Heart left ventricle (tissue), 16 donors: ENCODE measurements at regions of chr10 and their contacts with region 1.

Region 1: DNA sequence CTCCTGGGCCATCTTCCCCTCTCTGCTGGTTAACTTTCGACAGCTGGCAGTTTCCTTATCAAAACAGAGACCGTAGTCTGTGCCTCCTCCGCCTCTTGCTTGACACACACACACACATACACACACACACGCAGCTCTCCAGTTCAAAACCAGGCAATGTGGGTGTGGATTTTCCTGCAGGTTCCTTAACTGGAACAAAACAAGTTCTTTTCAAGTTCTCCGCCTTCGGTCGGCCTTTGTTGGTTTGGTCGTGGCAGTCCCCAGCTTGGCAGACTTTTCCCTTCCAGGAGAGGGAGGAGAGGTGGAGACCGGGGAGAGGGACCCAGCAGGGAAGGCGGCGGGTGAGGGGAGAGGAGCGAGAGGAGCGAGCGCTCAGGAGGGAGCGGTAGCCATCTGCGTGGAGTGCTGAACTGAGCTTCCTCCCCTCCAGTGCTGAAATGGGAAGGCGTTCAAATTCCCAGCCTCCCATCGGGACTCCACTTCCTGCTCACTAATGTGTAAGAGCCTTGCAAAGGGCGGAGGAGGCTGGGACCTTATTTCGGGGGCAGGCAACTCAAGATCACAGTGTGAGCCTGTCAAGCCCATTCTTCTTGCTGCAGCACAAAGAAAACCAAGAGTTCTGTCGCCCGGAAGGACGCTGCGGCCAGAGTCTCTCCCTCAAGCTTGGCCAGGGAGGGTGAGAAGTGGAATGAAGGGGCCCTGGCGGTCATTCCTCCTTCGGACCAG is 120.6 kb downstream of the PRPF18 start:
- DNase-seq: peak; percentile 86 to 93 (median 91)
- ATAC-seq: peak; percentile 81 to 92 (median 92)
- H3K4me3 ChIP-seq: peak overlapping the region; percentile 16 to 78 (median 63)
- H3K27ac ChIP-seq: peak overlapping the region; percentile 60 to 91 (median 82)
- H3K4me1 ChIP-seq: peaks cover 4 to 92% (median 58%) of the 10 kb centered on the region in 12 donors
- H3K27me3 ChIP-seq: no peaks in the 10 kb centered on the region
- CTCF ChIP-seq: peak in 3 of 12 donors; percentile 4 to 18 (median 8)
- POLR2A ChIP-seq: peak in 1 of 2 donors; percentile 31

Region 2: GRCh38 chr10:13684252-13684791 is 23.0 kb before region 1 on chr10:
- intact Hi-C with region 1: loop called in 1 of 10 experiments (anchors 1 kb)
- DNase-seq: peak; percentile 89 to 94 (median 90)
- ATAC-seq: peak; percentile 60 to 77 (median 68)
- H3K4me3 ChIP-seq: peak overlapping the region in 1 of 12 donors; percentile 0
- H3K27ac ChIP-seq: peak overlapping the region; percentile 60 to 95 (median 84)
- H3K4me1 ChIP-seq: peaks cover 11 to 64% (median 46%) of the 10 kb centered on the region in 12 donors
- H3K27me3 ChIP-seq: no peaks in the 10 kb centered on the region
- CTCF ChIP-seq: no peak
- POLR2A ChIP-seq: no peak

Region 3: DNA sequence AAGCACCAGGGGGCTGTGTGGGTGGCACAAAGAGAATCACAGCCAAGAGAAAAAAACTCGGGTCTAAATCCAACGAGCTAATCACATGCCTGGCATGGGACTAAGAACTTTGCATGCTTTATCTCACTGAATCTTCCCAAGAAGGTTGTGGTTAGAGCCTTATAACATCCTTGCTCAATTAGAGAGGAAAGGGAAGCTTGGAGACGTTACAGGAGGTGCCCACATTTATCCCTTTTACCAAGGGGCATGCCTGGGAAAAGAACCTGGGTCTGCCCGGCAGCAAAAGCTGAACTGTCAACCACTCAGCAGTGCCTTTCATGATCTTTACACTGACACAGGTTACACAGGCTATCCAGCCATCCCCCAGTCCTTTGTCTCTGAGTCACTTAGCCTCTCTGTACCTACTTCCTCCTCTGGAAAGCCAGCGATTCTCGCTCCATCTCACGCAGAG is 69.6 kb after region 1 on chr10:
- intact Hi-C with region 1: loop called in 3 of 10 experiments (anchors 5 to 10 kb)
- DNase-seq: no peak
- ATAC-seq: no peak
- H3K4me3 ChIP-seq: no peak overlapping the region
- H3K27ac ChIP-seq: no peak overlapping the region
- H3K4me1 ChIP-seq: peaks cover 0 to 29% (median 11%) of the 10 kb centered on the region in 12 donors
- H3K27me3 ChIP-seq: no peaks in the 10 kb centered on the region
- CTCF ChIP-seq: no peak
- POLR2A ChIP-seq: no peak